Activated T-helper 1 cell treated with anti-CD3 and anti-CD28 coated beads, Interleukin-12 subunit alpha, Interleukin-12 subunit beta, Interleukin-2, Interleukin-4 antibody, amounts not matched to agents 30 ng/mL and 10 ng/mL and 1 ng/mL, durations not matched to agents 14 hours and 24 hours and 36 hours (primary cell): ENCODE measurements at regions of chr19 and their contacts with region 1.

Region 1: DNA sequence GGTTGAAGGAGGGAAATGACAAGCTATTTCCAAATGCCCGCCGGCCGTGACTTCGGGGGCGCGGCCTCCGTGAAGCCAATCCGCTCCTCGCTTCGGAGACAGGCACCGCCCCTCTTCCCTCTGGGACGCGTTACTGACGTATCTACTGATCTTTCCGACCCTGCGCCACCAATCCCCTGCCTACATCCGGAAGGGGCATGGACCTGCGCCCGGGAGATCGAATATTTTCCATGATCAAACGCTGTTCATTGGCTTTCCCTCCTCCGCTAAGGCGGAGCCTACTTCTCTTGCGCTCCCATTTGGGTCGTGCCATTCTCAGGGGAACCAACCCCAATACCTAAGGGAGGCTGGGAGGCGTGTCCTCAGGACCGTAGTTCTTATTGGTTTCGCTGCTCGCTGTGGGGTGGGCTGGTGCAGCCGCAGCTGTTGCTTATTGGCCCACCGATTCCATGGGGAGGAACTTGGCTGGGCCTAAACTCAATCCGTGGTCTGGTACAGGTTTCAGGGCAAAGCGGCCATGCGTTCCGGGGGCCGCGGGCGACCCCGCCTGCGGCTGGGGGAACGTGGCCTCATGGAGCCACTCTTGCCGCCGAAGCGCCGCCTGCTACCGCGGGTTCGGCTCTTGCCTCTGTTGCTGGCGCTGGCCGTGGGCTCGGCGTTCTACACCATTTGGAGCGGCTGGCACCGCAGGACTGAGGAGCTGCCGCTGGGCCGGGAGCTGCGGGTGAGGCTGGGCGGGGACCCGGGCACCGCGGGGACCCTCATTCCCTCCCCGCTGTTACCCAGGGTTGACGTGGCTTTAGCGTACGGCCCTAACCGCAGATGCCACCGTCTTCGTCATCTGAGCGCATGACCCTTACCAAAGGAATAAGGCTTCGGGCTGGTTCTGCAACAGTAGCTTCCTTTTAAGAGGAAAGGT is at the start of gene QPCTL:
- DNase-seq: peak; percentile 97
- H3K4me3 Mint-ChIP-seq: peak within 1 kb of the TSS; percentile 98
- H3K27ac Mint-ChIP-seq: peak within 1 kb of the TSS; percentile 99
- H3K4me1 Mint-ChIP-seq: peaks cover 5% of the 10 kb centered on the region
- H3K27me3 Mint-ChIP-seq: no peaks in the 10 kb centered on the region
- total RNA-seq, gene QPCTL: 13.7 and 18.0 TPM in 2 replicates

Region 2: GRCh38 chr19:45423589-45424190 is 268.8 kb before region 1 on chr19 and contains the start of gene ERCC1:
- intact Hi-C with region 1: loop called (anchors 1 kb)
- DNase-seq: peak; percentile 82
- H3K4me3 Mint-ChIP-seq: peak within 1 kb of the TSS; percentile 97
- H3K27ac Mint-ChIP-seq: peak within 1 kb of the TSS; percentile 95
- H3K4me1 Mint-ChIP-seq: peaks cover 50% of the 10 kb centered on the region
- H3K27me3 Mint-ChIP-seq: peaks cover 9% of the 10 kb centered on the region
- total RNA-seq, gene ERCC1: 143 and 152 TPM in 2 replicates

Region 3: GRCh38 chr19:45523642-45524256 is 168.7 kb before region 1 on chr19:
- intact Hi-C with region 1: loop called (anchors 2 kb)
- DNase-seq: peak; percentile 65
- H3K4me3 Mint-ChIP-seq: no peak overlapping the region
- H3K27ac Mint-ChIP-seq: peak overlapping the region; percentile 37
- H3K4me1 Mint-ChIP-seq: peaks cover 14% of the 10 kb centered on the region
- H3K27me3 Mint-ChIP-seq: no peaks in the 10 kb centered on the region

Region 4: GRCh38 chr19:45615795-45616708 is 76.4 kb before region 1 on chr19:
- intact Hi-C with region 1: no loop called
- DNase-seq: peak; percentile 66
- H3K4me3 Mint-ChIP-seq: no peak overlapping the region
- H3K27ac Mint-ChIP-seq: peak overlapping the region; percentile 52
- H3K4me1 Mint-ChIP-seq: peaks cover 13% of the 10 kb centered on the region
- H3K27me3 Mint-ChIP-seq: no peaks in the 10 kb centered on the region

Region 5: DNA sequence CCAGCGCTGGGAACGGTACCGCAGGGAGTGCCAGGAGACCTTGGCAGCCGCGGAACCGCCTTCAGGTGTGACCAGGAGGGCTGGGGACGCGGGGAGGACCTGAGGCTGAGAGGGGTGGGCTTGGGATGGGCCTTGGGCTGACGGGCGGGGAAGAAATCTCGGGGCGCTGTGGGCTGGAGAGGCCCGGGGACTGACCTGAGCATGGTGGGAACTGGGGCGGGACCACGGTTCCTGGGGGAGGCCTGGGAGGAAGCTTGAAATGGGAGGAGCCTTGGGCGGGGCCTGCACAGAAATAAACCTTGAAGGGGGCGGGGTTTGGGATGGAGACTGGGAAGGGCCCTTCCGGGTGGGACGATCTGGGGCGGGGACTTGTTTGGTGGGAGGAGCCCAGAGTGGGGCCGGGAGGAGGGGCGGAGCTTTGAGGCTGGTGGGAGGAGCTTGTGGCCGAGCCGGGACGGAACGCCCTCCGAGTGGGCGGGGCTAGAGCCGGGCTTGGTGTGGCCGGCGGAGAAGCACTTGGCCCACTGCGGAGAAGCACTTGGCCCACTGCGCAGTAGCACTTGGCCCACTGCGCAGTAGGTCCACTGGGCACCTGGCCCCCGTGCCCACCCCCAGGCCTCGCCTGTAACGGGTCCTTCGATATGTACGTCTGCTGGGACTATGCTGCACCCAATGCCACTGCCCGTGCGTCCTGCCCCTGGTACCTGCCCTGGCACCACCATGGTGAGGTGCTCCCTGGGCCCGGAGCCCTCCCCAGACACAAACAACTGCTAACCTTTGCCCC is 21.6 kb before region 1 on chr19:
- intact Hi-C with region 1: loop called (anchors 1 kb)
- DNase-seq: peak; percentile 68
- H3K4me3 Mint-ChIP-seq: peak overlapping the region; percentile 64
- H3K27ac Mint-ChIP-seq: peak overlapping the region; percentile 63
- H3K4me1 Mint-ChIP-seq: peaks cover 30% of the 10 kb centered on the region
- H3K27me3 Mint-ChIP-seq: peaks cover 10% of the 10 kb centered on the region

Region 6: GRCh38 chr19:45717166-45717982 is 24.9 kb after region 1 on chr19:
- intact Hi-C with region 1: loop called (anchors 1 kb)
- DNase-seq: peak; percentile 99
- H3K4me3 Mint-ChIP-seq: peak overlapping the region; percentile 96
- H3K27ac Mint-ChIP-seq: peak overlapping the region; percentile 96
- H3K4me1 Mint-ChIP-seq: peaks cover 40% of the 10 kb centered on the region
- H3K27me3 Mint-ChIP-seq: no peaks in the 10 kb centered on the region

Region 7: GRCh38 chr19:45770192-45771101 is 78.0 kb after region 1 on chr19:
- intact Hi-C with region 1: loop called (anchors 1 kb)
- DNase-seq: peak; percentile 85
- H3K4me3 Mint-ChIP-seq: peak overlapping the region; percentile 88
- H3K27ac Mint-ChIP-seq: no peak overlapping the region
- H3K4me1 Mint-ChIP-seq: peaks cover 9% of the 10 kb centered on the region
- H3K27me3 Mint-ChIP-seq: peaks cover 20% of the 10 kb centered on the region

Region 8: DNA sequence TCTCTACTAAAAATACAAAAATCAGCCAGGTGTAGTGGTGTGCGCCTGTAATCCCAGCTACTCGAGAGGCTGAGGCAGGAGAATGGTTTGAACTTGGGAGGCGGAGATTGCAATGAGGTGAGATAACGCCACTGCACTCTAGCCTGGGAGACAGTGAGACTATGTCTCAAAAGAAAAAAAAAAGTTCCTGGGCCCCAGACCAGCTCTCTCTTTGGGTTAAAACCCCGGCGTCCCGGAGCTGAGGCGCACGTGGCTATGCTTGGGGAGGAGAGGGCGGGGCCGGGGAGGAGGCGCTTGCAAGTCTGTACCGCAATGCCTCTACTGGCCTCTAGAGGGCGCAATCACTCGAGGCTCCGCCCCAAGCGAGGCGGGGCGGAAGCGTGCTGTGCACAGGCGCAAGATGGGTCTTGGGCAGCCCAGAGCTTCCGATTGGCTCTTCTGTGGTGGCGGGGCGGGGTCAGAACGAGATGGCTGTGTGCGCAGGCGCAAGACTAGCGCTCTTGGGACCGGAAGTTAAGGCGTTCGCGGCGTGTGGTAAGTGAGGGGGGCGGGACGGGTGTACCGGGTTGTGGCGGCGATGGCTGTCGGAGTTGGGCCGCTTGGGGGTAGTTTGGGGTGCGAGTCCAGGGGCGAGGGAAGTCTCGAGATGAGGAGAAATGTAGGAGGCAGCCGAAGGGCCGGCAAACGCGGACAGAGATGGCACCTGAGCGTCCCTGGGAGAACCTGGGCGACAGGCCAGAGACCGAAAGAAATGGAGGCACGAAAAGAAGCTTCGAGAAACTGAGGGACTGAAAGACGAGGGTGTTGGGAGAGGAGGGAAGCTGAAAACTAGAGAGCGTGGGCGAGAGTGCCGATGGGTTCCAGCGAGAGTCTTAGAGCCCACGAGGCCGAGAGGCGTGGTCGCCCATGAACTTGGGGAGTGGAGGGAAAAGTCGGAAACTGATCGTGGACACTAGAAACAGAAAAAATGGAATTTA is 1656.7 kb after region 1 on chr19 and contains the start of gene DHX34:
- intact Hi-C with region 1: loop called (anchors 2 kb)
- DNase-seq: peak; percentile 100
- H3K4me3 Mint-ChIP-seq: peak within 1 kb of the TSS; percentile 93
- H3K27ac Mint-ChIP-seq: peak within 1 kb of the TSS; percentile 94
- H3K4me1 Mint-ChIP-seq: peaks cover 40% of the 10 kb centered on the region
- H3K27me3 Mint-ChIP-seq: no peaks in the 10 kb centered on the region
- total RNA-seq, gene DHX34: 31.1 and 33.9 TPM in 2 replicates